Sigmoid colon (tissue), 7 donors: ENCODE measurements at regions of chr9 and their contacts with region 1.

Region 1: DNA sequence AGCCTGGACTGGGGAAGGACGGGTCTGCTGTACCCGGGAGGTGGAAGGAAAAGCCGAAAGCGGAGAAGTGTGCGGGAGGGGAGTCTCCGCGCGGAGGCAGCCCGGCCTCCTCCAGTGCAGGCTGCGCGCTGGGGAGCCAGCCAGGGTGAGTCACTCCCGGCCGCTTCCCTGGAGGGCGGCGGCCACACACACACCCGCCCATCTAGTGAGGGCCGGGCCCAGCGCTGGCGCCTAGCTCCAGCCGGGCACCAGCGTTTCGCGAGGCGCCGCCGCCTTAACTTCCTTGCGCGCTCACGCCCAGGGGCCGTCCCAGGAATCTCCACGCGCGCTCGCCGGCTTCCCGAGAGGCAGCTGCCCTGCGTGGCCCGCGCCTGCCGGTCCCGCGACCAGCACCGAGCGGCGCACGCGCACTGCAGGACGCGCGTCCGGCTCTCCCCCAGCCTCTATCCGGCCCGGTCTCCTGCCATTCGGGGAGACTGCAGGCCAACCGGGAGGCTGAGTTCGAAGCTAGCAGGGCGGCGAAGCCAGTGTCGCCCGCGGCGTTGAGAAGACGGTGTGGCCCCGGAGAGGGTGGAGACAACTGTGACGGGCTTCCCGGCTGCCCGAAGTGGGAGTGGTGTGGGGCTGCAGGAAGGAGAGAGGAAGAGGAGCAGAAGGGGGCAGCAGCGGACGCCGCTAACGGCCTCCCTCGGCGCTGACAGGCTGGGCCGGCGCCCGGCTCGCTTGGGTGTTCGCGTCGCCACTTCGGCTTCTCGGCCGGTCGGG is at the start of gene JAK2:
- DNase-seq: peak; percentile 96
- H3K4me3 ChIP-seq: peak within 1 kb of the TSS; percentile 64 to 94 (median 84)
- H3K27ac ChIP-seq: peak within 1 kb of the TSS; percentile 95 to 99 (median 97)
- H3K4me1 ChIP-seq: peaks cover 0 to 45% (median 34%) of the 10 kb centered on the region in 4 donors
- H3K27me3 ChIP-seq: no peaks in the 10 kb centered on the region
- CTCF ChIP-seq: peak in 1 of 4 experiments; percentile 25
- EP300 ChIP-seq: no peak
- POLR2A ChIP-seq: peak; percentile 52 to 62
- total RNA-seq, gene JAK2: 28.5 to 36.8 (median 31.0) TPM

Region 2: DNA sequence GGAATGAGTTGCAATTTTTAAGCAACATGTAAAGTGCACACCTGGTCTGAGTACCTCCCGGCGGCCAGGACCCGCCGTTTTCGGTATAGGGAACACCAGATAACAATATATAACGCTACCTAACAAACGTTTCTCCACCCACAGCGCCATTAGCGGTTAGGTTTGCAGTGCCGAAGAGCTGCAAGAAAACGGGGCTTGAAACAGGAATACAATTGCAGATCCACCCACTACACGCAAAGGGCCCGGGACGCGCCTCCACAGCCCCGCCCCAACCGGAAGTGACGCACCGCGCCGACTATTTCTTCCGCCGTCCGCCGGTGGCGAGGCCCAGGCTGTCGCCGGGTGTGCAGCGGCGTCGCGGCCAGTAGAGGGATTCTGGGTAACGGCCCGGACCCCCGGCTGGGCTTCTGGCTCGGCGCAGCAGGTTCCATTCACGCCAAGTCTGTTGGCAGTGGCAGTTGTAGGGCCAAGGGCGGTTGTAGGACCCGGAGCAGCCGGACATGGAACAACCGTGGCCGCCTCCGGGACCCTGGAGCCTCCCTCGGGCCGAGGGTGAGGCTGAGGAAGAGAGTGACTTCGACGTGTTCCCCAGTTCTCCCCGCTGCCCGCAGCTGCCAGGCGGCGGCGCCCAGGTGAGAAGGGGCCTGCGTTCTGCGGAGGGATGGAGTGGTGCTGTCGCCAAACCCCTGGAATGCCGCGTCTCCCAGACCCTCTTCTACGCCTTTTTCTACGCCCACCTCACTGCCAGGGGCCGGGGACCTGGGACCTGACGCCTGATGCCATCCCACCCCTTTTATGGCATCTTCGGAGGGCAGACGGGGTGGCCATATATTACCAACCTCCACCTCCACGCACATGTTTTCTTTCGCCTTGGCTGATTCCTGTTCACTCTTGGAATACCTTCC is 305.3 kb before region 1 on chr9 and contains the start of gene CDC37L1:
- intact Hi-C with region 1: loop called (anchors 10 kb)
- DNase-seq: peak; percentile 99
- H3K4me3 ChIP-seq: peak within 1 kb of the TSS; percentile 69 to 96 (median 82)
- H3K27ac ChIP-seq: peak within 1 kb of the TSS; percentile 93 to 99 (median 98)
- H3K4me1 ChIP-seq: peaks cover 0 to 40% (median 21%) of the 10 kb centered on the region in 4 donors
- H3K27me3 ChIP-seq: no peaks in the 10 kb centered on the region
- CTCF ChIP-seq: peak; percentile 70 to 82 (median 76)
- EP300 ChIP-seq: peak in 2 of 4 donors; percentile 34 to 64
- POLR2A ChIP-seq: peak; percentile 95 to 96
- total RNA-seq, gene CDC37L1: 30.7 to 40.6 (median 33.3) TPM

Region 3: GRCh38 chr9:4762108-4762885 is 222.5 kb before region 1 on chr9:
- intact Hi-C with region 1: loop called (anchors 2 kb)
- DNase-seq: peak; percentile 84
- H3K4me3 ChIP-seq: peak overlapping the region in 2 of 4 donors; percentile 4 to 10
- H3K27ac ChIP-seq: peak overlapping the region in 2 of 4 donors; percentile 2 to 46
- H3K4me1 ChIP-seq: peaks cover 0 to 8% (median 5%) of the 10 kb centered on the region in 4 donors
- H3K27me3 ChIP-seq: peaks cover 0 to 12% (median 0%) of the 10 kb centered on the region in 3 donors
- CTCF ChIP-seq: peak; percentile 37 to 89 (median 72)
- EP300 ChIP-seq: no peak
- POLR2A ChIP-seq: no peak

Region 4: GRCh38 chr9:5146241-5146908 is 161.6 kb after region 1 on chr9:
- intact Hi-C with region 1: no loop called
- DNase-seq: no peak
- H3K4me3 ChIP-seq: no peak overlapping the region
- H3K27ac ChIP-seq: no peak overlapping the region
- H3K4me1 ChIP-seq: no peaks in the 10 kb centered on the region
- H3K27me3 ChIP-seq: no peaks in the 10 kb centered on the region
- CTCF ChIP-seq: no peak
- EP300 ChIP-seq: no peak
- POLR2A ChIP-seq: no peak

Region 5: GRCh38 chr9:5437254-5438216 is 452.7 kb after region 1 on chr9 and contains the start of gene PLGRKT:
- intact Hi-C with region 1: loop called (anchors 5 kb)
- DNase-seq: peak; percentile 98
- H3K4me3 ChIP-seq: peak within 1 kb of the TSS; percentile 49 to 71 (median 70)
- H3K27ac ChIP-seq: peak within 1 kb of the TSS; percentile 84 to 94 (median 92)
- H3K4me1 ChIP-seq: peaks cover 0 to 16% (median 15%) of the 10 kb centered on the region in 4 donors
- H3K27me3 ChIP-seq: no peaks in the 10 kb centered on the region
- CTCF ChIP-seq: peak in 1 of 4 experiments; percentile 10
- EP300 ChIP-seq: no peak
- POLR2A ChIP-seq: peak; percentile 80 to 89
- total RNA-seq, gene PLGRKT: 14.1 to 25.0 (median 19.7) TPM

Region 6: DNA sequence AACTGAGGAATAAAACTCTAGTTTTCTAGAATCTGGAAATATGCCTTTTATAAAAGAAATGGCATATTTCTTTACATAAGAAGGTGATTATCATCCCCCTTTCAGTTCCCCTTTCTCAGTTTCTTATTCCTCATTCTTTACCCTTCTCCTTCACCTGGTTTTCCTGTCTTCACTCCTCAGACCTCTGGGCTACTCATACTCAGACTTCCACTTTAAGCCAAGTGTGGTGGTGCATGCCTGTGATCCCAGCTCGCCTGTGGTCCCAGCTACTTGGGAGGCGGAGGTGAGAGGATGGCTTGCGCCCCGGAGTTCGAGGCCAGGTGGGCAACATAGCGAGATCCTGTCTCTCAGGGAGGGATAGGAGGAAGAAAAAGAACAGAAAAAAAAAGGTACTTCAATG is 973.5 kb after region 1 on chr9:
- intact Hi-C with region 1: no loop called
- DNase-seq: no peak
- H3K4me3 ChIP-seq: no peak overlapping the region
- H3K27ac ChIP-seq: no peak overlapping the region
- H3K4me1 ChIP-seq: no peaks in the 10 kb centered on the region
- H3K27me3 ChIP-seq: no peaks in the 10 kb centered on the region
- CTCF ChIP-seq: no peak
- EP300 ChIP-seq: no peak
- POLR2A ChIP-seq: no peak

Region 7: DNA sequence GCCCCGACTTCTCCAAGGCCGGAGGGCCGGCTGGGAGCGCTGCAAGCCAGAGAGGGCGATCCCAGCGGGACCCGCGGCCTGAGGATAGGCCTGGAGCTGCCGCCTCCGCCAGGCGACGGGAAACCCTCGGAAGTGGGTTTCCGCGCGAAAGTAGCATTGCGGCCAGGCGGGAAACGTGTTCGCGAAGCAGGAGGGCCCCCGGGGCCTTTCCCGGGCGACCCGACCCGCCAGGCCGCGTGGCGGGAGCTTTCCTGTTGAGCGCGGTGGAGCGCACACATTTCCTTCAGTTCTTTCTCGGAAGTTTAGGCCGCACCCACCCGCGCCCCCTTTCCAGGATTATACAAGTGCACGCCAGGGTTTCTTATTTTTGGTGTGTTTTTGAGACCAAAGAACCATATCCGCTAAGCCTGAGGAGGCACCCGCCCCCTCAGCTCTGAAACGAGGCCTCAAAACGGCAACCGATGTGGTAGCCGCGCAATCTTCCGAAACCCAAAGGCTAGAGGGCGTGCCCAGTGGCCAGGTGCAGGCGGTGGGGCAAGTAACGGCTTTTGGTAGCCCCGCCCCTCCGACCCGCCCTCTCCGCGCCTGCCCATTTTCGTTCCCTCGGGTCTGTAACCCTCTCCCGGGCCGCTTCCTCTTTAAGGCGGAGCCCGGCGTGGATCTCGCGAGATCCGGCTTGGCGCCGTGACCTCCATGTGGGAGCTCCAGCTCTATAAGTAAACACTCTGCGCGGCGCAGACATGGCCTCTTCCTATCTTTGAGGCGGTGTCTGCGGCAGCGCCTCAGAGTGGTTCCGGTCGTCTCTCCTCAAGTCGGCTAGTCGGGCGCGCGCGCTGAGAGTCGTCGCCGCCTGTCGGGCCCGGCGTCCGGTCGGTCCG is 1427.9 kb after region 1 on chr9 and contains the start of gene UHRF2:
- intact Hi-C with region 1: loop called (anchors 10 kb)
- DNase-seq: peak; percentile 99
- H3K4me3 ChIP-seq: peak within 1 kb of the TSS; percentile 79 to 99 (median 88)
- H3K27ac ChIP-seq: peak within 1 kb of the TSS; percentile 86 to 90 (median 90)
- H3K4me1 ChIP-seq: peaks cover 0 to 43% (median 28%) of the 10 kb centered on the region in 4 donors
- H3K27me3 ChIP-seq: no peaks in the 10 kb centered on the region
- CTCF ChIP-seq: no peak
- EP300 ChIP-seq: no peak
- POLR2A ChIP-seq: peak; percentile 45 to 46
- total RNA-seq, gene UHRF2: 49.1 to 55.6 (median 53.6) TPM